ENCODE measurements at regions of chr12 and their contacts with region 1.

Region 1: DNA sequence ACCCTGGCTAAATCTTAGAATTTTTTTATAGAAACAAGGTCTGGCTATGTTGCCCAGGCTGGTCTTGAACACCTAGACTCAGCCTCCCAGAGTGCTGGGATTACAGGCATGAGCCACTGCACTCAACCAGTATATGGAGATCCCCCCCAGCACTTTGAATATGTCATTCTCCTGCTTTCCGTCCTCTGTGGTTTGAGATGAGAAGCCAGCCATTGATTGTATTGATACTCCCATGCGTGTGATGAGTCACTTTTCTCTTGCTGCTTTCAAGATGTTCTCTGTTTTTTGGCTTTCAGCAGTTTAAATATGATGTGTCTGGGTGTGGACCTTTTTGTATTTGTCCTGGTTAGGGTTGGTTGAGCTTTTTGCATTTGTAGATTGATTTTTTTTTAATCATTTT is 75.2 kb upstream of the DNM1L start:
- DNase-seq: peak; percentile 61
- ATAC-seq: peak; percentile 100
- H3K4me3 Mint-ChIP-seq: no peak overlapping the region
- H3K27ac Mint-ChIP-seq: peak overlapping the region; percentile 42
- H3K4me1 Mint-ChIP-seq: peaks cover 10% of the 10 kb centered on the region
- H3K27me3 Mint-ChIP-seq: no peaks in the 10 kb centered on the region

Region 2: DNA sequence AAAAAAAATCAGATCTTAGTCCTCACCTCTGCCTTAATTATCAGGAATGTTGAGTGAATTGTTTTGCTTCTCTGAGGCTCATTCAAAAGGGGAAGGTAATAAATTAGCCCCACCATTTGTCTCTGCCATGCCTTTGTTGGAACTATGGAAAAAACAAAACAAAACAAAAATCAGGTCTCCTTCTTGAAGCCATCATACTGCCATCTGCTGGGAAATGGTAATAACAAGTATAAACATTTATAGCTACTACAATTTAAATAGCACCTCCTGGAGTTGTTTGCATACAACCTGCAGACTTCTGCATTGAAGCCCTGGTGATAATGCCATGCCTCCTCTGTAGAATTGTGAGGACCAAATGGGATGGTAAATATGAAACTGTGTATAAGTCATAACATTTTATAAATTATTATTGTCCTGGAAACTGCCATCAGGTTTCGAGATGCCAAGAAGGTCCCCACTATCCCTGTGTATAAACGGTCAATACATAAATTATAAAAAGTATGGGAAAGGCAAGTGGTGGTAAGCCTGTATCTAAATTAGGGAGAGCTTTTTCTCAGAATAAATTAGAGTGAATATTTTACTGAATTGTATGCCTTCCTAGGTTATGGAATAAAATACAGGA is 291.7 kb before region 1 on chr12:
- CTCF ChIA-PET with region 1: no interaction called
- POLR2A ChIA-PET with region 1: no interaction called
- intact Hi-C with region 1: no loop called
- DNase-seq: no peak
- ATAC-seq: no peak
- H3K4me3 Mint-ChIP-seq: no peak overlapping the region
- H3K27ac Mint-ChIP-seq: no peak overlapping the region
- H3K4me1 Mint-ChIP-seq: peaks cover 2% of the 10 kb centered on the region
- H3K27me3 Mint-ChIP-seq: no peaks in the 10 kb centered on the region

Region 3: DNA sequence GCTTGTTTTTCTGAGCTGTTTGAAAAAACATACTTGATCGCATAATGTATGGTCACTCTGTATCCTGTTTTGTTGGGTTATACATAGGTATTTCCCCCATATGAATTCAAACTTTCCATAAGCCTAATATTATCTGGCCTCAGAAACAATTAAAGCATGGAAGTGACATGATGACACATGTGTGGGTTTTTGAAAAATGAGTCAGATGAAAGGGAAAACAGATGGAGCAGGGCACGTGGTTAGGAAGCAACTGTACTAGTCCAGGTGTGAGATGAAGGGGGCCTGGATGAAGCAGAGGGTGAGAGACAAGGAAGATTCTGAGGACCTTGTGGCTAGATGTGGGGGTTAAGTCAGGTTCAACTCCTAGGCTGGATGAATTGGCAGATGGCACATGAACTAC is 17.5 kb before region 1 on chr12:
- CTCF ChIA-PET with region 1: interaction called, 3 read pairs
- POLR2A ChIA-PET with region 1: no interaction called
- intact Hi-C with region 1: loop called in 1 of 2 experiments (anchors 2 kb)
- DNase-seq: no peak
- ATAC-seq: no peak
- H3K4me3 Mint-ChIP-seq: no peak overlapping the region
- H3K27ac Mint-ChIP-seq: no peak overlapping the region
- H3K4me1 Mint-ChIP-seq: peaks cover 47% of the 10 kb centered on the region
- H3K27me3 Mint-ChIP-seq: no peaks in the 10 kb centered on the region

Region 4: GRCh38 chr12:32698285-32698684 is 94.4 kb after region 1 on chr12:
- CTCF ChIA-PET with region 1: no interaction called
- POLR2A ChIA-PET with region 1: no interaction called
- intact Hi-C with region 1: no loop called
- DNase-seq: no peak
- ATAC-seq: no peak
- H3K4me3 Mint-ChIP-seq: no peak overlapping the region
- H3K27ac Mint-ChIP-seq: no peak overlapping the region
- H3K4me1 Mint-ChIP-seq: peaks cover 4% of the 10 kb centered on the region
- H3K27me3 Mint-ChIP-seq: no peaks in the 10 kb centered on the region

Region 5: DNA sequence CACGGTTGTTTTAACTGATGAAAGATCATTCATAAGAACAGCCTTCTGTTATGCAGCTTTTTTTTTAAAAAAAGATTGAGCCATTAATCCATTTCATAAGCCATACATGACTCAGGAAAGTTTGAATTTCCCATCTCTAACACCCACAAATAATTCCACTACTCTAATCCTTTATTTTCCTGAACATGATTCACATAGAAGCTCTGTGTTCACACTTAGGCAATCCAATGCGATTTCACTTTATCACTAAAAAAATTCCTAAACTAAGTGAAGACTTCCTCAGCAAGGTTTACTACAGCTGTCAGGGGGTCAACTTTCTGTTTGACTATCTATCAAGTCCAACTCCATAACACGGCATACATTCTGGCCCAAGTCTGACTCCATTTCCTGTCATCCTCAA is 266.9 kb after region 1 on chr12:
- CTCF ChIA-PET with region 1: no interaction called
- POLR2A ChIA-PET with region 1: no interaction called
- intact Hi-C with region 1: no loop called
- DNase-seq: no peak
- ATAC-seq: no peak
- H3K4me3 Mint-ChIP-seq: no peak overlapping the region
- H3K27ac Mint-ChIP-seq: no peak overlapping the region
- H3K4me1 Mint-ChIP-seq: no peaks in the 10 kb centered on the region
- H3K27me3 Mint-ChIP-seq: peaks cover 5% of the 10 kb centered on the region